ENCODE measurements at regions of chr9 and their contacts with region 1.

Region 1: GRCh38 chr9:27033823-27034403 is 28.4 kb upstream of the LRRC19 start:
- DNase-seq: no peak

Region 2: DNA sequence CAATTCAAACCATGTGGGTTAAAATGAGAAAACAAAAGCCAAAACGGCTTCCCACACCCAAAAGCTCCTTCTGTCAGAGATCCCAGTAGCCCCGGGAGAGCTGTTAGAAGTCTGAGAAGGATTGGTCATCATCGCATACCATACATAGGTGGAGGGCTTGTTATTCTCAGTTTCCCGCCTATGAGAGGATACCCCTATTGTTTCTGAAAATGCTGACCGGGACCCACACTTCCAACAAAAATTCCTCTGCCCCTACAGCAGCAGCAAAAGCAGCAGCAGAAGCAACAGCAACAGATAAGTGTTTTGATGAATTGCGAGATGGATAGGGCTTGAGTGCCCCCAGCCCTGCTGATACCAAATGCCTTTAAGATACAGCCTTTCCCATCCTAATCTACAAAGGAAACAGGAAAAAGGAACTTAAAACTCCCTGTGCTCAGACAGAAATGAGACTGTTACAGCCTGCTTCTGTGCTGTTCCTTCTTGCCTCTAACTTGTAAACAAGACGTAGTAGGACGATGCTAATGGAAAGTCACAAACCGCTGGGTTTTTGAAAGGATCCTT is 75.1 kb after region 1 on chr9 and contains the start of gene TEK:
- intact Hi-C with region 1: loop called (anchors 10 kb)
- DNase-seq: no peak
- total RNA-seq, gene TEK: 21.0 TPM

Region 3: GRCh38 chr9:27194401-27195091 is 160.6 kb after region 1 on chr9:
- intact Hi-C with region 1: loop called (anchors 5 kb)
- DNase-seq: no peak

Region 4: DNA sequence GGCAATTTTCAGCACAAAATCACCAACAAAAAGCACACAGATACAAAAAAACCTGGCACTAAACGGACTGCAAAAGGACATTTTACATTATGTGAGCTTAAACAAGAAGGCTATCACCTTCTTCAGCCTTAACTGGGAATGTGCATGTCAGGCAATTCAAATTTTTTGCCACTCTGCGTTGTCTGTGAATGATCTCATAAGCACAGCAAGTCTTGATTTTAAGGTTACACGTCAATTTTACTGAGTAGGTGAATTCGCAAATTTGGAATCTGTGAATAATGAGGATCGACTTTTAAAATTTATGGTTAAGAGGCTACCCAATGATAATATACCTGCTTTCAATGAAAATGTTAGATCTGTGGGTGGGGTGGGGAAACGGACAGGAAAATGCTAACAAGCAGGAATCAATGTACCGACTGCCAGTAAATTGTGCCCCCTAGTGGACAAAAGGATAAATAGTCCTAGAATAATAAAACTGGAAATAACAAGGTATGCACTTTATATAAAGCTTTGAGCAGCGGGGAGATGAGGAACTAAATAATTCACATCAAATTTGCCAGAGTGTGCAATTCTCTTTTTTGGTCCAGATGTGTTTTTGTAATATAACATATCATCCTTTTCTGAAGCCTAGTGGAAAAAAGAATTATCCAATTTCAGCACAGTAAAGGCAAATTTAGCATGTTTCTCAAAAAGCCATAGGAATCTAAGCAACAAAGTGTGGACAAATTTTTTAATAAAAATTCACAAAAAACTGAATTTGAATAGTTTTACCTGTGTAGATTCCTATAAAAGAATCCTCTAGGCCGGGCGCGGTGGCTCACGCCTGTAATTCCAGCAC is 242.5 kb after region 1 on chr9:
- intact Hi-C with region 1: loop called (anchors 2 kb)
- DNase-seq: no peak